ENCODE measurements at regions of chr18 and their contacts with region 1.

Region 1: GRCh38 chr18:49561289-49562193 is at the start of gene LIPG:
- DNase-seq: peak; percentile 69 to 94
- H3K4me3 ChIP-seq: peak within 1 kb of the TSS; percentile 83
- H3K27ac ChIP-seq: peak within 1 kb of the TSS; percentile 86
- H3K4me1 ChIP-seq: peaks cover 19% of the 10 kb centered on the region
- H3K27me3 ChIP-seq: no peaks in the 10 kb centered on the region
- CTCF ChIP-seq: no peak
- total RNA-seq, gene LIPG: 22.7 and 30.9 TPM in 2 replicates

Region 2: DNA sequence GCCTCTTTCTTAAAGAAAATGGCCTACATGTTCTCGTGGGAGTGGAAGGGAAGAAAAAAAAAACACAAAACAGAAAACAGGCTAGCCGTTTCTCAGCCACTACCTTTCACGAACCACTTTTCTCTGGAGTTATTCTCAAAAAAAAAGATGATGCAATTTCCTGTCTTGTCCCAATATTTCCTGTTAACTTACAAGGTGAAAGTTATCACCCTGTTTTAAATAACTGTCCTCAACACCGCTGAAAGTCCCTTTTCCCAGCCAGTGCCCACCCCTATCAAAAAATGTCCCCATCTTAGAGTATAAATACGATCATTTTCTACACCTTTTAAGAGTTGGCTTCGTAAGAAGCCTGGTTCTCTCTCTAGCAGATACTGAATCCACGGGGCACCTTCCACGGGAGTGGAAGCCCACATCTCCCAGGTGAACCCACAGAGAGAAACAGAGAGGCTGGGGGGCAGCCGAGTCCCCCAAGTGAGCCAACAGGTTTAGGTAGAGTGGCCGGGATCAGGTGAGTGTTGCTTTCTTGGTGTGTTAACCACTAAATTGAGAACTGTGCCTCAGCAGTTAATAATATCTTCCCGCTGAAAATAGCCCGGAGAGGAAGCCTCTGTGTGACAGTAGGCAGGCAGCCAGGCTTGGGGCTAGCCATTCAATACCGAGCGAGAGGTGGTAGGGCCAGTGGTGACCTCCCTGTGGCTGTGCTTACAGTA is 626.7 kb before region 1 on chr18:
- CTCF ChIA-PET with region 1: no interaction called
- POLR2A ChIA-PET with region 1: no interaction called
- intact Hi-C with region 1: no loop called
- DNase-seq: no peak
- H3K4me3 ChIP-seq: no peak overlapping the region
- H3K27ac ChIP-seq: peak overlapping the region; percentile 22; the same call in 1 of the 2 replicates
- H3K4me1 ChIP-seq: peaks cover 50% of the 10 kb centered on the region
- H3K27me3 ChIP-seq: no peaks in the 10 kb centered on the region
- CTCF ChIP-seq: no peak

Region 3: DNA sequence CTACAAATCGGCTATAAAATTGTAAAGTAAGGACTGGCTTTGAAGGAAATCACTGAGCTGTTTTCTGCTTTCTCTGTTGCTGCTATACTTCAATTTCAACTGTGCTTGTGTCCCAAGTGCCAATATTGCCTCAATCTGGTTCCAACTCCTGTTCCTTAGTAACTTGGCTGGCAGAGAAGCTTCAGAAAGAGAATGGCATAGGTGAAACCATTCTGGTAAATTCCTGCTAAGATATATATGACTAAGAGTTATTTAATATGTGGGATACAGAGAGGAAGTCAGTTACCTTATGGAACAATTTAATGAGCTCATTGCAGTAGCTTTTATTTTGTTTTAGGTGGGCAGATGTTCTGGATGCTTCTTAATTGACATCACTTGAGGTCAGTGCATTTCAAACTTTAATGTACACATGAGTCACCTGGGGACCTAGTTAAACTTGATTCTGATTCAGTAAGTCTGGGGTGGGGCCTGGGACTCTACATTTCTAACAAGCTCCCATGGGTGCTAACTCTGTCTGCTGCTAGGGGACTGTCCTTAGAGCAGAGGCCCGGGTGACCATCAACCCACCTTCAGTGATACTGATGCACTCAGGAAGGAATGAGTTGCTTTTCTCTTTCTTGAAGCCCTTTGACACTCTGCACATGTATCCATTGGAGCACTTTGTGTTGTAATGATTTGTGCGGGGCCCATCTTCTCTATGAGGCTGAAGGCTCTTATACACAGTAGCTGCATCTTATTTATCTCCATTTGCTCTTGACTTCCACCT is 47.9 kb after region 1 on chr18:
- CTCF ChIA-PET with region 1: no interaction called
- POLR2A ChIA-PET with region 1: no interaction called
- intact Hi-C with region 1: no loop called
- DNase-seq: peak; percentile 19 to 97
- H3K4me3 ChIP-seq: no peak overlapping the region
- H3K27ac ChIP-seq: peak overlapping the region; percentile 85
- H3K4me1 ChIP-seq: peaks cover 39% of the 10 kb centered on the region
- H3K27me3 ChIP-seq: no peaks in the 10 kb centered on the region
- CTCF ChIP-seq: no peak

Region 4: GRCh38 chr18:49656073-49656591 is 94.6 kb after region 1 on chr18:
- CTCF ChIA-PET with region 1: no interaction called
- POLR2A ChIA-PET with region 1: no interaction called
- intact Hi-C with region 1: loop called (anchors 2 kb)
- DNase-seq: peak; percentile 66 to 99
- H3K4me3 ChIP-seq: 0 out of 2 replicates have a peak overlapping the region, but pooled peaks have one; percentile 11
- H3K27ac ChIP-seq: peak overlapping the region; percentile 87
- H3K4me1 ChIP-seq: peaks cover 19% of the 10 kb centered on the region
- H3K27me3 ChIP-seq: no peaks in the 10 kb centered on the region
- CTCF ChIP-seq: no peak

Region 5: GRCh38 chr18:49728542-49728941 is 167.0 kb after region 1 on chr18:
- CTCF ChIA-PET with region 1: no interaction called
- POLR2A ChIA-PET with region 1: no interaction called
- intact Hi-C with region 1: loop called (anchors 5 kb)
- DNase-seq: peak in 1 of 2 experiments; percentile 42
- H3K4me3 ChIP-seq: no peak overlapping the region
- H3K27ac ChIP-seq: no peak overlapping the region
- H3K4me1 ChIP-seq: peaks cover 71% of the 10 kb centered on the region
- H3K27me3 ChIP-seq: no peaks in the 10 kb centered on the region
- CTCF ChIP-seq: peak; percentile 73

Region 6: DNA sequence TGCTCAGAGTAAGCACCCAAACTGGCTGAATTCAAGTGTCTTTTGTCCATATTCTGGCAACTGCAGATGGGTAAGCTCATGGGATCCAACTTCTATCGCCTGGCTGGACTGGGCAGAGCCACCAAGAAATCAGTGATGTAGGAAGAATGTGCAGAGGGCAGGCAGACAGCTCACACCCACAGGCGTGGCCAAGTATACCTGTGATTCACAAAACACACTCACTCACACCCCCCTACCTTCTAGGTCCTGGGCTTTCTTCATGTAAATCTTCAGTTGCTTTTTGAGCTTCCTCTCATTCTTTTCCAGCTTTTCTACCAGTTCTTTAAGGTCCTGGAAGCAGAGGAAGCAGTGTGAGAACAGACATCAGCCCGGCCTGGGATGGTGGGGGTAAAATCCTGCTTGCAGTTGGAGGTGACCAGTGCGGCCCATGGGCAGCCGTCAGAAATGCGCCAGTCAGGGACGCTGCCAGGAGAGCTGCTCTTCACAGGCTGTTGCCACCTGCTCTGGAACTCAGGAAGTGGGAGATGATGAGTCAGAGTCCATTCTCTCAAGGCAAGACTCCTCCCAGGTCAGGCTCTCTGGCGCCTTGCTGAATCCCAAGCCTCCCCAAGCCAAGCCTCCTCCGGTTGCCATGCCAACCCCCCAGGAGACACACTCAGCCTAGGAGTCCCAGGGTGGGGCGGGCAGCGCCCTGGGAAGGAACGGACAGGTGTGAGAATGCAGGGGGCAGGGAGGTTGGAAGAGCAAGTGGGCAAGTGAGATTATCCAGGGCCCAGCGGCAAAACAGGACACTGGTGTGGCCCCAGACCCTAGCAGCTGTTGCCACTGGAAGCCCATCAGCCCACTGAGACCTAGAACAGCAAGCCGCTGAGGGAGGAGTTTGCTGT is 288.0 kb after region 1 on chr18:
- CTCF ChIA-PET with region 1: no interaction called
- POLR2A ChIA-PET with region 1: no interaction called
- intact Hi-C with region 1: loop called (anchors 2 kb)
- DNase-seq: peak; percentile 93 to 99
- H3K4me3 ChIP-seq: peak overlapping the region; percentile 43
- H3K27ac ChIP-seq: peak overlapping the region; percentile 90
- H3K4me1 ChIP-seq: peaks cover 29% of the 10 kb centered on the region
- H3K27me3 ChIP-seq: no peaks in the 10 kb centered on the region
- CTCF ChIP-seq: no peak

Measured in PC-9 (cell line).